ENCODE measurements at regions of chr13 and their contacts with region 1.

Region 1: GRCh38 chr13:43905435-43906031 is 25.8 kb downstream of the LACC1 start:
- DNase-seq: peak; percentile 58
- ATAC-seq: peak; percentile 83
- H3K4me3 ChIP-seq: no peak overlapping the region
- H3K27ac ChIP-seq: no peak overlapping the region
- H3K4me1 ChIP-seq: peaks cover 0 to 7% of the 10 kb centered on the region in 2 experiments; a peak in 2 of 4 replicates
- H3K27me3 ChIP-seq: no peaks in the 10 kb centered on the region
- CTCF ChIP-seq: peak; percentile 62 to 83 (median 62)
- POLR2A ChIP-seq: no peak
- RAD21 ChIP-seq: peak; percentile 87

Region 2: DNA sequence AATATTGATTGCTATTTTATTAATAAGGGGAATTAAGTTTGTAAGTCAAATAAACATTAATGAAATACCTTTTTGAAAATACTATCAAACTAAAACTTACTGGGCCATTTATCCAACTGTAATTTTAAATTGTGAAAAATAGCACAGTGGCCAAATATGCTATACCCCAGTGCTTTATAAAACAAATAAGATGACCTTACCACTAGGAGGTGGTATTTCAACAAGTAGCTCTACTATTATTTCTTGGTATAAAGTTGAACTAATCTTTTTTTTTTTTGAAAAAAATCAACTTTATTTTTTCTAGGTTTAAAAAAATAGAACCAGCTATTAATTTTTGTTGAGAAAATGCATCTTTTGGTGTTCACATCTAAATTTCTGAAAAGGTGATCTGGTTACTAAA is 11.1 kb before region 1 on chr13:
- CTCF ChIA-PET with region 1: interaction called, 10 read pairs
- POLR2A ChIA-PET with region 1: no interaction called
- RAD21 ChIA-PET with region 1: no interaction called
- intact Hi-C with region 1: no loop called
- DNase-seq: no peak
- ATAC-seq: peak; percentile 67
- H3K4me3 ChIP-seq: no peak overlapping the region
- H3K27ac ChIP-seq: no peak overlapping the region
- H3K4me1 ChIP-seq: no peaks in the 10 kb centered on the region
- H3K27me3 ChIP-seq: no peaks in the 10 kb centered on the region
- CTCF ChIP-seq: peak in 2 of 3 experiments; percentile 25 to 53; a peak in 3 of 6 replicates
- POLR2A ChIP-seq: no peak
- RAD21 ChIP-seq: 0 out of 2 replicates have a peak, but pooled peaks have one; percentile 10

Region 3: GRCh38 chr13:44132710-44133109 is 227.2 kb after region 1 on chr13:
- CTCF ChIA-PET with region 1: no interaction called
- POLR2A ChIA-PET with region 1: no interaction called
- RAD21 ChIA-PET with region 1: no interaction called
- intact Hi-C with region 1: no loop called
- DNase-seq: peak; percentile 38
- ATAC-seq: peak; percentile 60
- H3K4me3 ChIP-seq: no peak overlapping the region; a peak in 2 of 4 replicates
- H3K27ac ChIP-seq: no peak overlapping the region
- H3K4me1 ChIP-seq: peaks cover 5 to 29% of the 10 kb centered on the region in 2 experiments; a peak in 2 of 4 replicates
- H3K27me3 ChIP-seq: no peaks in the 10 kb centered on the region
- CTCF ChIP-seq: no peak
- POLR2A ChIP-seq: no peak
- RAD21 ChIP-seq: no peak

Region 4: GRCh38 chr13:44191504-44192171 is 286.1 kb after region 1 on chr13:
- CTCF ChIA-PET with region 1: interaction called, 3 read pairs
- POLR2A ChIA-PET with region 1: no interaction called
- RAD21 ChIA-PET with region 1: no interaction called
- intact Hi-C with region 1: loop called (anchors 2 kb)
- DNase-seq: peak; percentile 81
- ATAC-seq: peak; percentile 93
- H3K4me3 ChIP-seq: 0 out of 4 replicates have a peak overlapping the region, but pooled peaks of 1 of the 2 experiments have one; percentile 21
- H3K27ac ChIP-seq: no peak overlapping the region
- H3K4me1 ChIP-seq: peaks cover 5 to 41% of the 10 kb centered on the region in 2 experiments
- H3K27me3 ChIP-seq: no peaks in the 10 kb centered on the region
- CTCF ChIP-seq: peak; percentile 47 to 73 (median 63); a peak in 5 of 6 replicates
- POLR2A ChIP-seq: no peak
- RAD21 ChIP-seq: peak; percentile 70

Region 5: GRCh38 chr13:44243198-44243857 is 337.8 kb after region 1 on chr13:
- CTCF ChIA-PET with region 1: interaction called, 13 read pairs
- POLR2A ChIA-PET with region 1: no interaction called
- RAD21 ChIA-PET with region 1: interaction called in 1 of 2 experiments, 5 read pairs
- intact Hi-C with region 1: loop called (anchors 1 kb)
- DNase-seq: peak; percentile 92
- ATAC-seq: peak; percentile 87
- H3K4me3 ChIP-seq: no peak overlapping the region
- H3K27ac ChIP-seq: peak overlapping the region; percentile 50
- H3K4me1 ChIP-seq: peaks cover 24 to 45% of the 10 kb centered on the region in 2 experiments
- H3K27me3 ChIP-seq: no peaks in the 10 kb centered on the region
- CTCF ChIP-seq: peak in 2 of 3 experiments; percentile 66 to 73; a peak in 4 of 6 replicates
- POLR2A ChIP-seq: no peak
- RAD21 ChIP-seq: no peak

Region 6: GRCh38 chr13:44470638-44471562 is 565.4 kb after region 1 on chr13:
- CTCF ChIA-PET with region 1: interaction called, 24 read pairs
- POLR2A ChIA-PET with region 1: interaction called, 7 read pairs
- RAD21 ChIA-PET with region 1: interaction called in 1 of 2 experiments, 3 read pairs
- intact Hi-C with region 1: loop called (anchors 1 kb)
- DNase-seq: peak; percentile 35
- ATAC-seq: no peak
- H3K4me3 ChIP-seq: no peak overlapping the region
- H3K27ac ChIP-seq: no peak overlapping the region
- H3K4me1 ChIP-seq: peaks cover 13 to 30% of the 10 kb centered on the region in 2 experiments
- H3K27me3 ChIP-seq: no peaks in the 10 kb centered on the region
- CTCF ChIP-seq: peak; percentile 35 to 63 (median 50); a peak in 4 of 6 replicates
- POLR2A ChIP-seq: no peak
- RAD21 ChIP-seq: peak; percentile 78

Region 7: DNA sequence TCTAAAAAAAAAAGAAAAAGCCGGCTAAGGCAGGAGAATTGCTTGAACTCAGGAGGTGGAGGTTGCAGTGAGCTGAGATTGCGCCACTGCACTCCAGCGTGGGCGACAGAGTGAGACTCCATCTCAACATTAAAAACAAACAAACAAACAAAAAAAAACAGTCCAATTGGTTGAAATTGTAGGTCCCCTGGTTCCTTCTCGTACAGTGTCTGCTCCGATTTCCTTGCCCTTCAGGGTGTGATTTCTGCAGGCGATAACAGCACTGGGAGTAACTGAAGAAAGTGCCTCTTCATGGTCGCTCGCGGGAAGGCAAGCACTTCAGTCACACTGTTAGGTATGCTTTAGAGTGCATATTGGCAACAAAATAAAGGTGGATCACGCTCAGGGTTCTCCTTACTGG is 1395.7 kb after region 1 on chr13:
- CTCF ChIA-PET with region 1: no interaction called
- POLR2A ChIA-PET with region 1: no interaction called
- RAD21 ChIA-PET with region 1: no interaction called
- intact Hi-C with region 1: loop called (anchors 10 kb)
- DNase-seq: no peak
- ATAC-seq: no peak
- H3K4me3 ChIP-seq: no peak overlapping the region
- H3K27ac ChIP-seq: no peak overlapping the region
- H3K4me1 ChIP-seq: peaks cover 0 to 7% of the 10 kb centered on the region in 2 experiments; a peak in 1 of 4 replicates
- H3K27me3 ChIP-seq: no peaks in the 10 kb centered on the region
- CTCF ChIP-seq: no peak
- POLR2A ChIP-seq: no peak
- RAD21 ChIP-seq: no peak